Activated B cell treated with CpG ODN at 0.5 μM for 24 hours (primary cell): ENCODE measurements at regions of chr5 and their contacts with region 1.

Region 1: GRCh38 chr5:2038321-2039179 is 155.8 kb upstream of the IRX4 start:
- DNase-seq: peak; percentile 57
- ATAC-seq: peak; percentile 83
- H3K4me3 Mint-ChIP-seq: peak overlapping the region; percentile 68
- H3K27ac Mint-ChIP-seq: no peak overlapping the region
- H3K4me1 Mint-ChIP-seq: no peaks in the 10 kb centered on the region
- H3K27me3 Mint-ChIP-seq: peaks cover 23% of the 10 kb centered on the region
- CTCF ChIP-seq: peak; percentile 40

Region 2: GRCh38 chr5:1666812-1667588 is 371.6 kb before region 1 on chr5:
- CTCF ChIA-PET with region 1: no interaction called
- POLR2A ChIA-PET with region 1: no interaction called
- intact Hi-C with region 1: loop called (anchors 5 kb)
- DNase-seq: no peak
- ATAC-seq: peak; percentile 61
- H3K4me3 Mint-ChIP-seq: no peak overlapping the region
- H3K27ac Mint-ChIP-seq: no peak overlapping the region
- H3K4me1 Mint-ChIP-seq: peaks cover 8% of the 10 kb centered on the region
- H3K27me3 Mint-ChIP-seq: peaks cover 66% of the 10 kb centered on the region
- CTCF ChIP-seq: no peak

Region 3: DNA sequence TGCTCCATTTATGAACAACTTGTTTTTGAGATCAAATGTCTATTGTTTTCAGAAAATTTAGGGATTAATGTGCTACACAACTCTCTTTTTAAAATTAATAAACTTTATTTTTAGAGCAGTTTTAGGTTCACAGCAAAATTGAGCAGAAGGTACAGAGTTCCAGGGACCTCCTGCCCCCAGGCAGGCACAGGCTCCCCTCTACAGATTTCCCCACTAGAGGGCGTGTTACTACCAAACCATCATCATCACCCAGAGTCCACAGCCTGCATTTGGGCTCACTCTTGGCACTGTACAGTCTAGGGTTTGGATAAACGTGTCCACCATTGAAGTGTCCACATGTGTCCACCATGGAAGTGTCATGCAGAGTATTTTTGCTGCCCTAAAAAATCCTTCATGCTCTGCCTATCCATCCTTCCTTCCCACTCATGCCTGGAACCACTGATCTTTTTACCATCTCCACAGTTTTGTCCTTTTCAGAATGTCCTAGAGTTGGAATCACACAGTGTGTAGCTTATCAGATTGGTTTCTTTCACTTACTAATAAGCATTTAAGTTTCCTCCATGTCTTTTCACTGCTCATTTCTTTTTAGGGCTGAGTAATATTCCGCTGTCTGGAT is 300.7 kb before region 1 on chr5:
- CTCF ChIA-PET with region 1: interaction called, 3 read pairs
- POLR2A ChIA-PET with region 1: no interaction called
- intact Hi-C with region 1: loop called (anchors 1 kb)
- DNase-seq: no peak
- ATAC-seq: peak; percentile 56
- H3K4me3 Mint-ChIP-seq: no peak overlapping the region
- H3K27ac Mint-ChIP-seq: no peak overlapping the region
- H3K4me1 Mint-ChIP-seq: no peaks in the 10 kb centered on the region
- H3K27me3 Mint-ChIP-seq: peaks cover 8% of the 10 kb centered on the region
- CTCF ChIP-seq: no peak

Region 4: GRCh38 chr5:1763548-1763911 is 275.0 kb before region 1 on chr5:
- CTCF ChIA-PET with region 1: interaction called, 13 read pairs
- POLR2A ChIA-PET with region 1: no interaction called
- intact Hi-C with region 1: loop called (anchors 1 kb)
- DNase-seq: no peak
- ATAC-seq: no peak
- H3K4me3 Mint-ChIP-seq: no peak overlapping the region
- H3K27ac Mint-ChIP-seq: no peak overlapping the region
- H3K4me1 Mint-ChIP-seq: no peaks in the 10 kb centered on the region
- H3K27me3 Mint-ChIP-seq: peaks cover 32% of the 10 kb centered on the region
- CTCF ChIP-seq: no peak